Sciatic nerve (tissue), 2 donors: ENCODE measurements at regions of chr7 and their contacts with region 1.

Region 1: GRCh38 chr7:140517546-140518369 is 38.5 kb upstream of the MKRN1 start:
- DNase-seq: peak; percentile 96
- ATAC-seq: peak; percentile 96

Region 2: DNA sequence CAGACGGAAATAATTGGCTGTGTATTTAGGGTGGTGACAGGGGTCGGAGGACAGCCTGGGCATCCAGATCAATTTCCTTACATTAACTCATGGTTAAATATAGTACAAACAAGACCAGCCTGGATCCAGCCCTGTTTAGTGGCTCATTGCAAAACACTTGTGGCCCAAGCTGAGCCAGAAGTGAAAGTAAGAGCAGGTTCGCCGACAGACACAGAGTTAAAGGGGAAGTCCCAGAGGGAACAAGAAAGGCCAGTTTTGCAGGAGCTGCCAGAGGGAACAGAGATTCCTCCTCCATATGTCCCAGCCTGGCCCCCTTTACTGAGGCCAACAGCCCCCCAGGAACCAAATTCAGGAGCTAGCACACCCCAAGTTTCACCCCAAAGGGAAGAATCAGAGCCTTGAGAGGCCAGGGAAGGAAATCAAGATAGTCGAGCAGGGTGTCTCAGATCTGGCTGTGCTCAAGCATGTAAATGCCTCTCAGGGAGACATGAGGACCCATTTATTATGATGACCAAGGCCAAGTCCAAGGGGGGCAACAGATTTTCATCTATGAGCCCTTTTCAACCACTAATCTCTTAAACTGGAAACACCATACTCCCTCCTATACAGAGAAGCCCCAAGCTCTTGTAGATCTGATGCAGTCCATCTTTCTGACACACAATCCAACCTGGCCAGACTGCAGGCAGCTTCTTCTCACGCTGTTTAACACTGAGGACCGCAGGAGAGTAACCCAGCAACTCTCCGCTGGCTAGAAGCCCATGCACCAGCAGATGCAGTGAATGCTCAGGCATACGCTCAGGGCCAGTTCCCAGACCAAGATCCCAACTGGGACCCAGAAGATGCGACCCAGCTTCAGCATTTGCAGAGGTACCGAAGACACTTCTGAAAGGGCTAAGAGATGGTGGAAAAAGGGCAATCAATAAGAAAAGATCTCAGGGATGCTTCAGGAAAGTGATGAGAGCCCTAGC is 139.1 kb after region 1 on chr7:
- intact Hi-C with region 1: loop called (anchors 5 kb)
- DNase-seq: peak; percentile 64
- ATAC-seq: peak; percentile 66

Region 3: GRCh38 chr7:141874787-141875186 is 1357.0 kb after region 1 on chr7:
- intact Hi-C with region 1: no loop called
- DNase-seq: no peak
- ATAC-seq: no peak